Activated T-helper 1 cell treated with anti-CD3 and anti-CD28 coated beads, Interleukin-12 subunit alpha, Interleukin-12 subunit beta, Interleukin-2, Interleukin-4 antibody, amounts not matched to agents 30 ng/mL and 10 ng/mL and 1 ng/mL, durations not matched to agents 14 hours and 24 hours and 36 hours (primary cell): ENCODE measurements at regions of chr1 and their contacts with region 1.

Region 1: DNA sequence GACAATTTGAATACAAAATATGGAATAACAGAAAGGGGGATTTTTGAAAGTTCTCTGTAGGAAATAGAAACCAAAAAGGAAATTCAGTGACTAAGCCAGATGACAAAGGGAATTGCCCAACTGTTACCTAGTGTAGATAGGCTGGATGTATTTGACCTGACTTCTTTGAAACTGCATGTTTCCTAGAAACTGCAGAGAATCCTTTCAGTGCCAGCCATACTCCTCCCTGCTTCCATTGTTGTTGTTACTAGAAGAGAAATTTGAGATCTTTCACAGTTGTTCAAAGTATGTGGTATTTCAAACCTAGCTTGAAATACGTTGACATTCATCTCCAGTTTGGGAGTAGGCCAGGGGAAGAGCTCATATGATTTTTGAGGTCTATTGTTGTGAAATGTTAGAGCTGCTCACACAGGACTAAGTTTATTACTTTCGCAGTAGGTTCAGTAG is 1.8 kb upstream of the GBP5 start:
- DNase-seq: peak; percentile 43
- H3K4me3 Mint-ChIP-seq: peak overlapping the region; percentile 75
- H3K27ac Mint-ChIP-seq: peak overlapping the region; percentile 97
- H3K4me1 Mint-ChIP-seq: peaks cover 66% of the 10 kb centered on the region
- H3K27me3 Mint-ChIP-seq: no peaks in the 10 kb centered on the region

Region 2: GRCh38 chr1:88634538-88634937 is 639.9 kb before region 1 on chr1:
- intact Hi-C with region 1: no loop called
- DNase-seq: no peak
- H3K4me3 Mint-ChIP-seq: no peak overlapping the region
- H3K27ac Mint-ChIP-seq: no peak overlapping the region
- H3K4me1 Mint-ChIP-seq: no peaks in the 10 kb centered on the region
- H3K27me3 Mint-ChIP-seq: peaks cover 4% of the 10 kb centered on the region

Region 3: GRCh38 chr1:89198491-89199072 is 75.9 kb before region 1 on chr1 and contains the start of gene GBP4:
- intact Hi-C with region 1: loop called (anchors 1 kb)
- DNase-seq: peak; percentile 43
- H3K4me3 Mint-ChIP-seq: peak within 1 kb of the TSS; percentile 93
- H3K27ac Mint-ChIP-seq: peak within 1 kb of the TSS; percentile 93
- H3K4me1 Mint-ChIP-seq: peaks cover 88% of the 10 kb centered on the region
- H3K27me3 Mint-ChIP-seq: no peaks in the 10 kb centered on the region
- total RNA-seq, gene GBP4: 36.8 and 37.5 TPM in 2 replicates

Region 4: DNA sequence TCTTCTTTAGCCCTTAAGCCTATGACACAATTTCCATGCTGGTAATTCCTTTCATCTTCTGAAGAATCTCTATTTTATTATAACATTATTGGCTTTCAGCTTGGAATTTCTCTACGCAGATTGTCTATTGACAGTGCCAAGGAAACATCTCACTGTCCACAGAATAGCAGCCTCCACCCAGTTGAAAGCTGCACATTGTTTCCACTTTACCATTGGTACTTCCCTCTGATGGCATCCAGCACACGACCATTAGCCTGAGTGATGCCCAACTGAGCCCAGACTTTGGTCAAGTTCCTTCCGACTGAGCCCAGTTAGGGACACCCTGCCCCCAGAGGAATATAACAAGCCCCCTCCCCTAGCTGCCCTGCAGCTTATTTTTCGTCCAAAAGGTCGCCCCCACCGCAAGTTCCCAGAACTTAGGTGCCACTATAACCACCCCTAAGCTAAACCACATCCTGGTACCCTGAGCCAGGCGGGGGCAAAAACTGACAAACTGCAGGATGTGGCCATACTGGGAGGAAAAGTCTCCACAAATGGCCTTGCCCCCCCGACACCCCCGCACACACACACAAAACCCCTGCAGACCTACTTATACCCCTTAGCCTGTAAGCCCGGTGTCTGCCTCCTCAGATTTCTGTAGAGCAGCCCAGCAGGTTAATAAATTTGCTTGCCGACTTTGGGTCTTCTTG is 15.0 kb before region 1 on chr1:
- intact Hi-C with region 1: loop called (anchors 1 kb)
- DNase-seq: peak; percentile 43
- H3K4me3 Mint-ChIP-seq: peak overlapping the region; percentile 76
- H3K27ac Mint-ChIP-seq: peak overlapping the region; percentile 94
- H3K4me1 Mint-ChIP-seq: peaks cover 76% of the 10 kb centered on the region
- H3K27me3 Mint-ChIP-seq: no peaks in the 10 kb centered on the region

Region 5: GRCh38 chr1:89286549-89287180 is 12.2 kb after region 1 on chr1:
- intact Hi-C with region 1: loop called (anchors 1 kb)
- DNase-seq: peak; percentile 29
- H3K4me3 Mint-ChIP-seq: peak overlapping the region; percentile 41
- H3K27ac Mint-ChIP-seq: peak overlapping the region; percentile 92
- H3K4me1 Mint-ChIP-seq: peaks cover 83% of the 10 kb centered on the region
- H3K27me3 Mint-ChIP-seq: no peaks in the 10 kb centered on the region

Region 6: DNA sequence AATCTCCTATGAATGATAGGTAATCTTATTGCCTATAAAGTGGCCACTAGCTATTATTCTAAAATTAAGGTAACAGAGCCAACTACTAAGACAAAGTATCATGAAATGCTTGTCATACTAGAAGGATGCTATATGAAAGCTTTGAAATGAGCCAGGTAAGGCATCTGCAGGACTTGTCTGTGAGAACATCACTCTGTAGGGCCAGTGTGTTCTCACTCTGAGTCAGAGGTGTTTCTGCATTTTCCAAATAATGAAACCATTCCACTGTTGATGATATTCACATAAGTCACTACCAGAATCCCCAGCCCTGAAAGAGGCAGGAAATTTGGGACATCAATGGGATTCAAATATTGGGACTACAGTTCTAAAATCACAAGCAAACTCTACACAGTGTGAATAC is 24.0 kb after region 1 on chr1:
- intact Hi-C with region 1: loop called (anchors 1 kb)
- DNase-seq: no peak
- H3K4me3 Mint-ChIP-seq: peak overlapping the region; percentile 37
- H3K27ac Mint-ChIP-seq: peak overlapping the region; percentile 75
- H3K4me1 Mint-ChIP-seq: peaks cover 81% of the 10 kb centered on the region
- H3K27me3 Mint-ChIP-seq: no peaks in the 10 kb centered on the region

Region 7: DNA sequence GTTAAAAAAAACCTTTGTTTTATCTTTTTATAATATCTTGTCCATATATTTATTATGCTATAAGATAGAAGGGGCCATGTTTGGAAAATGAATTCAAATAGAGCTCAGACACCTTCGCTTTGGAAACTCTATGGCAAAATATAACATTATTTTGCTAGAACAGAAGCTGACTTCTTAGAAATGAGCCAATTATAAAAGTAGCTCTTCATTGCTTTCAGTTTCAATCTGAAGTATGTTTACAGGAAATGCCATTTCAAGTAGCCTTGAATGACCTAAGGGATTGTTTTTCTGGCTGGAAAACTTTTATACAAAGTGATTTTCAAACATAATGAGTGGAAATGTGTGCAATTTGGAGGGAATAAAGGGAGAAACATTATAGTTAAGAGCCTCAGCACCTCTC is 36.1 kb after region 1 on chr1:
- intact Hi-C with region 1: loop called (anchors 1 kb)
- DNase-seq: no peak
- H3K4me3 Mint-ChIP-seq: peak overlapping the region; percentile 47
- H3K27ac Mint-ChIP-seq: peak overlapping the region; percentile 87
- H3K4me1 Mint-ChIP-seq: peaks cover 64% of the 10 kb centered on the region
- H3K27me3 Mint-ChIP-seq: no peaks in the 10 kb centered on the region

Region 8: DNA sequence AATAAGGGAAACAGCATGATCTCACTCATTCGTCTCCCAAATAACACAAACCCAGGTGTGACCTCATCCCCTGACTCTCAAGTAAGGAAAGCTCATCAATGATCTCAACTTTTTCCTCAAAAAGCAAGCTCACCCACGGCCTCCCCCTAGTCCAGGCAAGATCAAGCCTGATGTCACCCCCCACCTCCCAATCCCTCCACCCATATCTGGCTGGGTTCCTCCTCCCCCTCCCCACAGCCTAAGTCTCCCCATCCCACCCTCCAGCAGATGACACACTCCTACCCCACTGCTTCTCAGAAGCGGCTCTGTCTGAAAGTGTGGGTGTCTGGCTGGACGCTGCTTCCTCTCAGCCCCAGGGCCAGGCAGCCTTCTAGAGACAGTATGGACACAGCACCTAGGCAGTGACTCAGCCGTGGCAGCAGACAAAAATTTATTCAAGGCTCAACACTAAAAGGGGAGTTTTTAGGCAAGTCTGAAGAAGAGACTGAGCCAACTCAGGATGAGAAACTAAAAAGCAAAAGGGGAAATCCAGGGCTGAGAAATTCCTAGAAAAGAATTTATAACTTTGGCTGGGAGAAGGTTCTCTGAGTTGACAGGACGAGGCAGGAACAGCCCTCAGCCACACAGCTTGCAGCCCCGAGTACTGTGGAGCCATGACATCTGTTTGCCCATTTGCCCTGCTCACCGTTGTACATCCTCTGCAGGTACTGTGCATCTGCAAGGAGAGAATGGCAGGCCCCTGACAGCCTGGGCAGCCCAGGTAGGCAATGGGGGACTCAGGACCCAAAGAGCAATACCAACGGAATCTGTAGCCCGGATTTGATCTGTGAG is 464.8 kb after region 1 on chr1:
- intact Hi-C with region 1: loop called (anchors 10 kb)
- DNase-seq: no peak
- H3K4me3 Mint-ChIP-seq: peak overlapping the region; percentile 72
- H3K27ac Mint-ChIP-seq: peak overlapping the region; percentile 95
- H3K4me1 Mint-ChIP-seq: peaks cover 76% of the 10 kb centered on the region
- H3K27me3 Mint-ChIP-seq: peaks cover 3% of the 10 kb centered on the region